Kidney (tissue), 22 donors: ENCODE measurements at regions of chr12 and their contacts with region 1.

Region 1: DNA sequence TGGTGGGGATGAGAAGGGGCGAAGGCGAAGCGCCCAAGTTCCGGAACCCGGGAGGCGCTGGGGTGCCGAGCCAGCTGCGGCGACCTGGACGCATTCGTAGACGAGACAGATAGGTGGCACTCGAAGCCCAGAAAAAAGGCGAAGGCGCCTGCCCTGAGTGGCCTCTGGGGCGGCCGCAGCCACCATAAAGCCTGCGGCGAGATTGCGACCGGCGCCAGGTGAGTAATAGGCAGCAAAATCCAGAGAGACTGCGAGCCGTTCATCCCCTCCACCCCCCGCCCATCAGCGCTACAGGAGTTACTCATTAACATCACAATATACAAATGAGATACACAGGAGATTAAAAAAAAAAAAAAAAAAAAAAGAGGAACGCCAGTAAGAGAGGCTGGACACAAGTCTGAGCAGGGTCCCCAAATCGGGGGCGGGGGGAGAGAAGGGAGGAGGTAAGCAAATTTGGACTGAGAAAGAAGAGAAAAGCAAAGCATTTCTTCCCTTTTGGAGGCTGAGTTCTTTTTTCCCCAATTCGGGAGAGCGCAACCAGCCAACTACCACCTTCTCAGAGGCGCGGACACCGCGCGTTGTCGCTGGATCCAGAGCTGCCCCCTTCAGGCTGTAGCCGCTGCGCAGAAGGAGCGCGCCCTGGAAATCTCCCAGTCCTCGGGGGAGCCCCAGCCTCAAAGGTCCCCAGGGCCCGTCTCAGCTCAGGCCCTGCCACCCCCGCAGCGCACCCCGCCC is 15.7 kb downstream of the TBX3 start:
- DNase-seq: peak; percentile 87 to 93 (median 91)
- H3K4me3 ChIP-seq: peak overlapping the region in 2 of 3 donors; percentile 44 to 45
- H3K27ac ChIP-seq: peak overlapping the region in 1 of 2 donors; percentile 37
- H3K4me1 ChIP-seq: peaks cover 0 to 8% (median 0%) of the 10 kb centered on the region in 3 donors
- H3K27me3 ChIP-seq: peaks cover 18% of the 10 kb centered on the region
- CTCF ChIP-seq: peak; percentile 57

Region 2: GRCh38 chr12:114038962-114039361 is 629.4 kb before region 1 on chr12:
- intact Hi-C with region 1: no loop called
- DNase-seq: no peak
- H3K4me3 ChIP-seq: no peak overlapping the region
- H3K27ac ChIP-seq: no peak overlapping the region
- H3K4me1 ChIP-seq: no peaks in the 10 kb centered on the region
- H3K27me3 ChIP-seq: no peaks in the 10 kb centered on the region
- CTCF ChIP-seq: no peak

Region 3: GRCh38 chr12:114799574-114800487 is 131.5 kb after region 1 on chr12:
- intact Hi-C with region 1: no loop called
- DNase-seq: peak; percentile 31 to 86 (median 52)
- H3K4me3 ChIP-seq: no peak overlapping the region
- H3K27ac ChIP-seq: no peak overlapping the region
- H3K4me1 ChIP-seq: no peaks in the 10 kb centered on the region
- H3K27me3 ChIP-seq: no peaks in the 10 kb centered on the region
- CTCF ChIP-seq: no peak

Region 4: GRCh38 chr12:114918535-114919233 is 250.4 kb after region 1 on chr12:
- intact Hi-C with region 1: no loop called
- DNase-seq: no peak
- H3K4me3 ChIP-seq: no peak overlapping the region
- H3K27ac ChIP-seq: no peak overlapping the region
- H3K4me1 ChIP-seq: no peaks in the 10 kb centered on the region
- H3K27me3 ChIP-seq: no peaks in the 10 kb centered on the region
- CTCF ChIP-seq: no peak

Region 5: GRCh38 chr12:115752913-115753726 is 1084.8 kb after region 1 on chr12:
- intact Hi-C with region 1: loop called (anchors 5 kb)
- DNase-seq: peak in 4 of 5 donors; percentile 50 to 89 (median 77)
- H3K4me3 ChIP-seq: no peak overlapping the region
- H3K27ac ChIP-seq: no peak overlapping the region
- H3K4me1 ChIP-seq: peaks cover 0 to 2% (median 0%) of the 10 kb centered on the region in 3 donors
- H3K27me3 ChIP-seq: no peaks in the 10 kb centered on the region
- CTCF ChIP-seq: peak; percentile 44

Region 6: DNA sequence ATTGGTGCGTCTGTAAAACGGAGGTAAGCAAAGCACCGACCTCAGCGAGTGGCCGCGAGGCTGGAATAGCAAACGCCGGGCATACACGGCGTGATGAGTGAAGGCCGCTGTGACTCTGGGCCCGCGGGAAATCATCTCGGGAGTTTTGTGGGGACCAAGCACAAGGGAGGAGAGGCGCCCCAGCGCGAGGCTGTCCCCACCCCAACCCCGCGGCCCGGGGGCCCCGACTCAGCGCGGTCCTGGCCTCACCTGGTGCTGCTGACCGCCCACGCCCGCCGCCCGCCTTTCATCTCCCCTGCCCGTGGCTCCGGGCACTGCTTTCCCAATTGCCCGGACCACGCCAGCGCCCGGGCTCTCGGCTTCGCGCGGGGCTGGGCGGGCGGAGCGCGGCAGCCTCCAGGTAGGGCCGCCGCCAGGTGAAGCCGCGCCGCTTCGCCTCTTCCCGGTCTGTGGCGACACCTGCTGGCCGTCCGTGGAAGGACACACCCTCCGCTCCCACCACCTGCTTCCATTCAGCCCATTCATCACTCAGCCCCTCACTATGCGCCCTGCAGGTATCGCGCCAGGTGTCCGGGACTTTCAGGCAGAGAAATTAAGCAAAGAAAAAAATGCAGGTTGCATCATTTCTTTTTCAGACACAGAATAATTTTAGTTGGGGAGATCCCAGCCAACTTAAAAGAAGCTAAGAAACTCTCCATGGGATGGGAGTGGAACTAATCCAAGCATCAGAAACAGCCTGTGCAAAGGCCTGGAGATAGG is 1248.8 kb after region 1 on chr12:
- intact Hi-C with region 1: loop called (anchors 5 kb)
- DNase-seq: peak; percentile 73 to 87 (median 76)
- H3K4me3 ChIP-seq: no peak overlapping the region
- H3K27ac ChIP-seq: no peak overlapping the region
- H3K4me1 ChIP-seq: peaks cover 0 to 2% (median 0%) of the 10 kb centered on the region in 3 donors
- H3K27me3 ChIP-seq: no peaks in the 10 kb centered on the region
- CTCF ChIP-seq: peak; percentile 96